ENCODE measurements at regions of chr13 and their contacts with region 1.

Region 1: GRCh38 chr13:32905063-32905863 is 111.0 kb upstream of the KL start:
- DNase-seq: peak; percentile 78
- ATAC-seq: peak; percentile 94
- H3K4me3 ChIP-seq: 0 out of 2 replicates have a peak overlapping the region, but pooled peaks have one; percentile 1
- H3K27ac ChIP-seq: peak overlapping the region; percentile 47; the same call in 1 of the 2 replicates
- H3K4me1 ChIP-seq: peaks cover 9% of the 10 kb centered on the region
- H3K27me3 ChIP-seq: no peaks in the 10 kb centered on the region
- CTCF ChIP-seq: no peak
- EP300 ChIP-seq: peak; percentile 55 to 88; a peak in 3 of 4 replicates
- POLR2A ChIP-seq: no peak
- RAD21 ChIP-seq: no peak

Region 2: DNA sequence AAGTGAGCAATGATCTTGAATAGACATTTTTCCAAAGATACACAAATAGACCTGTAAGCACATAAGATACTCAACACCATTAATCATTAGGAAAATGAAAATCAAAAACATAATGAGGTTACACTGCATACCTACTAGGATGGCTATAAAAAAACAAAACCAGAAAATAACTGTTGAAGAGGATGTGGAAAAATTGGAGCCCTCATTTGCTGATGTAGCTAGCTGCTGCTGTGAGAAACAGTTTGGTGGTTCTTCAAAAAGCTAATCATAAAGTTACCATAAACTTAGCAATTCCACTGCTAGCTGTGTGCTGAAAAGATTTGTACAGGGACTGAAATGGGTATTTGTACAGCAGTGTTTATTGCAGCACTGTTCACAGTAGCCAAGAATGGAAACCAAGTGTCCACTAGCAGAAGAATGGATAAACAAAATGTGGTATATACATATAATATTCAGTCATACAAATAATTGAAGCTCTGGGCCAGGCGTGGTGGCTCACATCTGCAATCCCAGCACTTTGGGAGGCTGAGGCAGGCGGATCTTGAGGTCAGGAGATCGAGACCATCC is 272.8 kb before region 1 on chr13:
- CTCF ChIA-PET with region 1: no interaction called
- POLR2A ChIA-PET with region 1: no interaction called
- RAD21 ChIA-PET with region 1: no interaction called
- SMC1A ChIA-PET with region 1: no interaction called
- in situ Hi-C with region 1: no loop called
- intact Hi-C with region 1: no loop called
- DNase-seq: no peak
- ATAC-seq: no peak
- H3K4me3 ChIP-seq: no peak overlapping the region
- H3K27ac ChIP-seq: no peak overlapping the region
- H3K4me1 ChIP-seq: no peaks in the 10 kb centered on the region
- H3K27me3 ChIP-seq: no peaks in the 10 kb centered on the region
- CTCF ChIP-seq: no peak
- EP300 ChIP-seq: no peak
- POLR2A ChIP-seq: no peak
- RAD21 ChIP-seq: no peak

Region 3: GRCh38 chr13:32779119-32779518 is 126.1 kb before region 1 on chr13:
- CTCF ChIA-PET with region 1: no interaction called
- POLR2A ChIA-PET with region 1: no interaction called
- RAD21 ChIA-PET with region 1: no interaction called
- SMC1A ChIA-PET with region 1: no interaction called
- in situ Hi-C with region 1: no loop called
- intact Hi-C with region 1: loop called (anchors 5 kb)
- DNase-seq: no peak
- ATAC-seq: no peak
- H3K4me3 ChIP-seq: no peak overlapping the region
- H3K27ac ChIP-seq: no peak overlapping the region
- H3K4me1 ChIP-seq: no peaks in the 10 kb centered on the region
- H3K27me3 ChIP-seq: no peaks in the 10 kb centered on the region
- CTCF ChIP-seq: no peak
- EP300 ChIP-seq: no peak
- POLR2A ChIP-seq: no peak
- RAD21 ChIP-seq: no peak

Region 4: GRCh38 chr13:32824671-32825070 is 80.6 kb before region 1 on chr13:
- CTCF ChIA-PET with region 1: interaction called, 8 read pairs
- POLR2A ChIA-PET with region 1: no interaction called
- RAD21 ChIA-PET with region 1: interaction called, 8 read pairs
- SMC1A ChIA-PET with region 1: interaction called, 24 read pairs
- in situ Hi-C with region 1: no loop called
- intact Hi-C with region 1: loop called (anchors 1 kb)
- DNase-seq: no peak
- ATAC-seq: no peak
- H3K4me3 ChIP-seq: no peak overlapping the region
- H3K27ac ChIP-seq: no peak overlapping the region
- H3K4me1 ChIP-seq: peaks cover 12% of the 10 kb centered on the region
- H3K27me3 ChIP-seq: no peaks in the 10 kb centered on the region
- CTCF ChIP-seq: no peak
- EP300 ChIP-seq: no peak
- POLR2A ChIP-seq: no peak
- RAD21 ChIP-seq: no peak

Region 5: GRCh38 chr13:32838945-32839344 is 66.3 kb before region 1 on chr13:
- CTCF ChIA-PET with region 1: interaction called, 6 read pairs
- POLR2A ChIA-PET with region 1: interaction called, 3 read pairs
- RAD21 ChIA-PET with region 1: interaction called, 5 read pairs
- SMC1A ChIA-PET with region 1: interaction called, 5 read pairs
- in situ Hi-C with region 1: no loop called
- intact Hi-C with region 1: loop called (anchors 1 kb)
- DNase-seq: no peak
- ATAC-seq: peak; percentile 83
- H3K4me3 ChIP-seq: peak overlapping the region; percentile 14; the same call in 1 of the 2 replicates
- H3K27ac ChIP-seq: peak overlapping the region; percentile 84
- H3K4me1 ChIP-seq: peaks cover 40% of the 10 kb centered on the region
- H3K27me3 ChIP-seq: no peaks in the 10 kb centered on the region
- CTCF ChIP-seq: no peak
- EP300 ChIP-seq: peak; percentile 40 to 71; a peak in 1 of 4 replicates
- POLR2A ChIP-seq: no peak
- RAD21 ChIP-seq: 0 out of 2 replicates have a peak, but pooled peaks have one; percentile 8

Region 6: GRCh38 chr13:32976047-32976805 is 71.0 kb after region 1 on chr13:
- CTCF ChIA-PET with region 1: no interaction called
- POLR2A ChIA-PET with region 1: no interaction called
- RAD21 ChIA-PET with region 1: no interaction called
- SMC1A ChIA-PET with region 1: no interaction called
- in situ Hi-C with region 1: no loop called
- intact Hi-C with region 1: no loop called
- DNase-seq: no peak
- ATAC-seq: no peak
- H3K4me3 ChIP-seq: no peak overlapping the region
- H3K27ac ChIP-seq: no peak overlapping the region
- H3K4me1 ChIP-seq: no peaks in the 10 kb centered on the region
- H3K27me3 ChIP-seq: no peaks in the 10 kb centered on the region
- CTCF ChIP-seq: no peak
- EP300 ChIP-seq: no peak
- POLR2A ChIP-seq: no peak
- RAD21 ChIP-seq: no peak

Region 7: DNA sequence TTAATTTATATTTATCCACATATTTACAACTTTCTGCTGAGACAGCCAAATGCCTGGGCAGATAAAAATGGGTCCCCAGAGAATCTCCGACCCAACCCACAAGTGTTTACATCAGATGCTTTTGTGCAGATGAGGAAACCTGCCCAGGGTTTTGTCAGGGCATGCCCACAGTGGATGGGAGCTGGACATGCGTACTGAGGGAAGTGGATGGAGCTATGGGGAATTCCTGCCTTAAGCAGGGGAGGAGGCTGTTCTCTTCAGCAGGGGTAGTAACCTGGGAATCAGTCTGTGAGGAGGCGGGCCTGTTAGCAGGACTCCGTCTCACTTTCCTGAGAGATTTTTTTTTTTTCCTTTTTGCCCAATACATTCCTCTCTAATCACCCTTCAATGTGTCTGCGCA is 1035.6 kb after region 1 on chr13:
- CTCF ChIA-PET with region 1: no interaction called
- POLR2A ChIA-PET with region 1: no interaction called
- RAD21 ChIA-PET with region 1: no interaction called
- SMC1A ChIA-PET with region 1: no interaction called
- in situ Hi-C with region 1: no loop called
- intact Hi-C with region 1: no loop called
- DNase-seq: no peak
- ATAC-seq: no peak
- H3K4me3 ChIP-seq: no peak overlapping the region
- H3K27ac ChIP-seq: no peak overlapping the region
- H3K4me1 ChIP-seq: no peaks in the 10 kb centered on the region
- H3K27me3 ChIP-seq: no peaks in the 10 kb centered on the region
- CTCF ChIP-seq: no peak
- EP300 ChIP-seq: no peak
- POLR2A ChIP-seq: no peak
- RAD21 ChIP-seq: no peak